Calu3 (cell line): ENCODE measurements at regions of chr6 and their contacts with region 1.

Region 1: DNA sequence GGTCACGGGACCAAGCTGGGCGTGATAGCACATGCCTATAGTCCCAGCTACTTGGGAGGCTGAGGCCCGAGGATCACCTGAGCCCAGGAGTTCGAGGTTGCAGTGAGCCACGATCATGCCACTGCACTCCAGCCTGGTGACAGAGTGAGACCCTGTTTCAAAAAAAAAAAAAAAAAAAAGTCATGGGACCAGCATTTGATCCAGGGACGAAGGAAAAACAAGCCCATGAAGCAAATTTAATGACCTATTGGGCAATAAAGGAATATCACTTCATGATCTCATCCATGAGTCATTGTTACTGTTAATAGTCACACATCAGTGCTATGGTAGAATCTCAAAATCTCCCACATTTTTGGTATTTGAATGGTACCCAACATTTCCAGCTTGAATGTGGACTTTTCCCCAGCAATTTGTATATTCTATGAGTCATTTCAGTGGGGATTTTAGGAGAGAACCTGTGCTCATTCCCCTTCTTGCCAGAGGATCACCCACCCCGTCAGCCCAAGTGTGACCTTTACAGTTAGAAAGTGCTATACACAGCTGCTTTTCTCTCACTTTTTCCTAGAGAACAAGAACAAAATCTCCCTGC is 8.5 kb upstream of the SOD2 start:
- DNase-seq: no peak
- H3K4me3 Mint-ChIP-seq: no peak overlapping the region
- H3K27ac Mint-ChIP-seq: peak overlapping the region; percentile 56
- H3K4me1 Mint-ChIP-seq: peaks cover 24% of the 10 kb centered on the region
- H3K27me3 Mint-ChIP-seq: no peaks in the 10 kb centered on the region
- CTCF ChIP-seq: no peak

Region 2: DNA sequence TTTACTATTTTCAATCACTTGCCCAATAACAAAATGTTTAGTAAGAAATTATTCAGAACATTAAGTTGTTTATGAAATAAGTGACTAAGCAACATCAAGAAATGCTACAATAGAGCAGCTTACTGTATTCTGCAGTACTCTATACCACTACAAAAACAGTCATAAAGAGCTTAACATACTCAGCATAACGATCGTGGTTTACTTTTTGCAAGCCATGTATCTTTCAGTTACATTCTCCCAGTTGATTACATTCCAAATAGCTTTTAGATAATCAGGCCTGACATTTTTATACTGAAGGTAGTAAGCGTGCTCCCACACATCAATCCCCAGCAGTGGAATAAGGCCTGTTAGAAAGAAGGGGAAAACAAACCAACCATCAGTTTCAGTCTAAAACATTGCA is 19.2 kb before region 1 on chr6:
- CTCF ChIA-PET with region 1: interaction called, 10 read pairs
- intact Hi-C with region 1: no loop called
- DNase-seq: no peak
- H3K4me3 Mint-ChIP-seq: no peak overlapping the region
- H3K27ac Mint-ChIP-seq: no peak overlapping the region
- H3K4me1 Mint-ChIP-seq: peaks cover 8% of the 10 kb centered on the region
- H3K27me3 Mint-ChIP-seq: no peaks in the 10 kb centered on the region
- CTCF ChIP-seq: no peak